Mammary epithelial cell (primary cell): ENCODE measurements at regions of chr1 and their contacts with region 1.

Region 1: DNA sequence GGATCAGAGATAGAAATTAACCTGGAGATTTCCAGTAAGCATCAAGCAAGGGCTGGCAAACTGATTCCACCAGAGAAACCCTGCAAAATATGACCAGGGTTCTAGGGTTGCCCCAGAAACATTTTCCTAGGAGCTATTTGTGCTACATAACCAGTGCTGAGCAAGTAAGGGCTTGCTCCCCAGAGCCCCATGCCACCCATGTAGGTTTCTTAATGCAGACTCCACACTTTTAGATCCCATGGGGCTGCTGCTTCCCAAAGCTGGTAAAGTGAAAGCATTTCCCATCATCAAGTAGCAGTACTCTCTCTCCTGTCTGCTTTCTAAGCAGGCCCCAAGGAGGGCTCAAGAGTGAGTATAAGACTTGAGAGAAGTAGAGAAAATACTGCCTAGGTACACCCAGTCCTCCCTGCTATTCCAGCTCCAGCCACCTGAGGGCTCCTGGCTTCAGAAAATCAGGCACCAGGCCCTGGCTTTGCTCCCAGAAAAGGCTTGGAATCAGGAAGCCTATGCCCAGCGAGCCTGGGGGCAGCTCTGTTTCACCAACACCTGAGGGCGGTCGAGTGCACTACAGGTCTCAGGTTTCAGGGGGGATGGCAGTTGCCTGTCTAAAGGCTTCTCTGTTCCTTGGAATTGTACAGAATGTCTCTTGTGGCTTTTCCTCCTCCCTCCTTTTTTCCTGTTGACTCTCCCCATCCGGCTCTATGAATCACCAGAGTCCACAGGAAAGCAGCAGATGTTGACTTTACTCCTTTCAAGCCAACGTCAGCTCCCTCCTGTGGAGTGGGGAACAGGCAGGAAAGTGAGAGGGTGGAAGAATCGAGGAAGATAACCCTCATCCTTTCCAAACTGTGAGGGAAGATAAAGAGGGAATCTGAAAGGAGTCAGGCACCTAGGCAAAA is 6.2 kb upstream of the ANKRD35 start:
- DNase-seq: peak; percentile 99
- H3K4me3 ChIP-seq: peak overlapping the region in 2 of 3 experiments; percentile 1 to 8
- H3K27ac ChIP-seq: peak overlapping the region; percentile 97
- H3K4me1 ChIP-seq: peaks cover 36% of the 10 kb centered on the region
- H3K27me3 ChIP-seq: no peaks in the 10 kb centered on the region
- CTCF ChIP-seq: peak; percentile 94 to 99

Region 2: GRCh38 chr1:145845514-145846161 is 46.2 kb before region 1 on chr1 and contains the start of gene NUDT17:
- CTCF ChIA-PET with region 1: no interaction called
- dilution Hi-C with region 1: no loop called
- in situ Hi-C with region 1: no loop called
- intact Hi-C with region 1: loop called (anchors 2 kb)
- DNase-seq: peak; percentile 53
- H3K4me3 ChIP-seq: peak within 1 kb of the TSS; percentile 22 to 66 (median 52)
- H3K27ac ChIP-seq: no peak within 1 kb of the TSS
- H3K4me1 ChIP-seq: peaks cover 32% of the 10 kb centered on the region
- H3K27me3 ChIP-seq: no peaks in the 10 kb centered on the region
- CTCF ChIP-seq: peak; percentile 73 to 97
- total RNA-seq, gene NUDT17: 2.7 to 4.3 TPM

Region 3: DNA sequence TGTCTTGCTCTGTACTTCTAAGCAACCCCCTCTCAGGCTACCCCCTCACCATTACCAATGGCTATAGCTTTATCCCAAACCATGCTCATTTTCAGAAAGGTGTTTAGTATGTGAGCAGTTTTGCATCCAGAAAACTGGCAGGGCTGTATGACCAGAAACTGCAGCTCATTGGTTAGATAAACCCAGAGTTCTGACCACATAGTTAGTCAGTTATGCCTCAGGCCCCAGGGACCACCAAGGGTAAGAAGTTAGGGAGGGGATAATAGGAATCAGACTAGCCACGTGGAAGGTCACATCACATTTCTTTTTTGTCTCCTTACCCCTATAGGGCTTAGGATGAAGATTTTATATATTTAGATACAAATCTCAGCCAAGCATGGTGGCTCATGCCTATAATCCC is 16.8 kb after region 1 on chr1:
- CTCF ChIA-PET with region 1: interaction called, 6 read pairs
- dilution Hi-C with region 1: no loop called
- in situ Hi-C with region 1: no loop called
- intact Hi-C with region 1: loop called (anchors 1 kb)
- DNase-seq: no peak
- H3K4me3 ChIP-seq: no peak overlapping the region
- H3K27ac ChIP-seq: no peak overlapping the region
- H3K4me1 ChIP-seq: peaks cover 19% of the 10 kb centered on the region
- H3K27me3 ChIP-seq: no peaks in the 10 kb centered on the region
- CTCF ChIP-seq: no peak

Region 4: DNA sequence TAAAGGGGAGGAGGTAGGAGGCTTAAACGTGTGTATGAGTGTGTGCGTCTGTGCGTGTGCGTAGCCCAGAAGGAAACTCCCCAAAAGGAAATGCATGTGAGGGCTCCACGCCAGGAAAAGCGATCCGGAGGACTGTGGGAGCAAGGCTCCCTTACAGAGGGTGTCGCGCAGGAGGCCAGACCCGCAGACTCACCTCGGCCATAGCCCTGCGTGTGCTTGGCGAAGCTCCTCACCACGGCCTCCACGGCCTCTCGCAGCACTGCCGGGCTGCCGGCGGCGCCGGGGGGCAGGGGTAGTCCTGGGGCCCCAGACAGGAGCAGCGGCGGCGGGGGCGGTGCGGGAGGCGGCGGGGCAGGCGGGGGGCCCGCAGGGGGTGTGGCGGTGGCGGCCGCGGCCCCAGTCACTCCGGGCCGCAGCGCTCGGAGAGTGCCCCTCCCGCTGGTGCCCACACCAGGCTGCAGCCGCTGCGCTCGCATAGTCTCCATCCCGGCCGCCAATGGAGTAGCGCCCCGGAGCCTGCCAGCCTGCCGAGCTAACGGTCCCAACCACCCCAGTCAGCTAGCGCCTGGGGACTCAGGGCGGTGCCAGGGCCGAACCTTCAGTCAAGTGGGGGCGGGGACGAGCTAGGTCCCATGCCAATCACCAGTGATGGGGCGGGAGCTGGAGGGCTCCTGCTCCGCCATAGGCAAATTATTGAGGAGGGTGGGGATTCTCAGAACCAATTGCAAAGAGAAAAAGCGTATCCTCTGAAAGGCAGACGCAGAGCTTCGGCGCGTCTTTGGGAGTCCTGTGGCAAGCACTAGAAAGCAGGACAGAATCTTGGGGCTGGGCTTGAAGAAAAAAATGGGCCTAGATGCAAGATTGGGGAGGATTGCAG is 65.8 kb after region 1 on chr1 and contains the start of gene LIX1L:
- CTCF ChIA-PET with region 1: no interaction called
- dilution Hi-C with region 1: no loop called
- in situ Hi-C with region 1: no loop called
- intact Hi-C with region 1: loop called (anchors 2 kb)
- DNase-seq: peak; percentile 97
- H3K4me3 ChIP-seq: peak within 1 kb of the TSS; percentile 60 to 81 (median 71)
- H3K27ac ChIP-seq: peak within 1 kb of the TSS; percentile 62
- H3K4me1 ChIP-seq: peaks cover 45% of the 10 kb centered on the region
- H3K27me3 ChIP-seq: no peaks in the 10 kb centered on the region
- CTCF ChIP-seq: no peak
- total RNA-seq, gene LIX1L: 16.0 TPM

Region 5: GRCh38 chr1:145996433-145997015 is 104.7 kb after region 1 on chr1 and contains the start of gene TXNIP:
- CTCF ChIA-PET with region 1: no interaction called
- dilution Hi-C with region 1: no loop called
- in situ Hi-C with region 1: loop called in 1 of 2 experiments (anchors 10 kb)
- intact Hi-C with region 1: no loop called
- DNase-seq: peak; percentile 93
- H3K4me3 ChIP-seq: peak within 1 kb of the TSS; percentile 58 to 84 (median 81)
- H3K27ac ChIP-seq: peak within 1 kb of the TSS; percentile 71
- H3K4me1 ChIP-seq: peaks cover 36% of the 10 kb centered on the region
- H3K27me3 ChIP-seq: no peaks in the 10 kb centered on the region
- CTCF ChIP-seq: no peak
- total RNA-seq, gene TXNIP: 92.8 to 355 TPM